Body of pancreas (tissue), 4 donors: ENCODE measurements at regions of chr2 and their contacts with region 1.

Region 1: GRCh38 chr2:187453078-187453641 is 5.1 kb upstream of the CALCRL start:
- DNase-seq: no peak
- ATAC-seq: no peak
- H3K4me3 ChIP-seq: no peak overlapping the region
- H3K27ac ChIP-seq: no peak overlapping the region
- H3K4me1 ChIP-seq: no peaks in the 10 kb centered on the region
- H3K27me3 ChIP-seq: no peaks in the 10 kb centered on the region
- CTCF ChIP-seq: peak in 6 of 7 experiments; percentile 21 to 45 (median 35)
- POLR2A ChIP-seq: no peak

Region 2: GRCh38 chr2:186862869-186863709 is 590.1 kb before region 1 on chr2:
- intact Hi-C with region 1: loop called (anchors 10 kb)
- DNase-seq: no peak
- ATAC-seq: no peak
- H3K4me3 ChIP-seq: no peak overlapping the region
- H3K27ac ChIP-seq: no peak overlapping the region
- H3K4me1 ChIP-seq: no peaks in the 10 kb centered on the region
- H3K27me3 ChIP-seq: no peaks in the 10 kb centered on the region
- CTCF ChIP-seq: peak; percentile 31 to 70 (median 65)
- POLR2A ChIP-seq: no peak

Region 3: DNA sequence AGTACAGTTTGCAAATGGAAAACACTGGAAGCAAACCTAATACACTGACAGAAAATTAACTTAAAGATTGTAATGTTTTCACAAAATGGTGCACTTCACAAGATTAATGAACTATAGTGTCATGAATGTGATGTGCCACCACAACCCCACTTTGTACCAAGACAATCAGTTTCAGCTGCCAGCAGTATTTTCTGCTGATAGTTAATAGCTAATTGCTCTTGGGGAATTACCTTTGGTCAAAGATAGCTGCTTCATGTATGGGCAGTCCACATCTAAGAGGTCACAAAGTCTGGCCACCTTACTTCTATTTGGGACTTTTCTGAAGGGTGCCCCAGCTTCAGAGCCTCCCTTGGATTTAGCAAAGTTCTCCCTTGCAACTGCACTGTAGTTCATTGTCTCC is 259.1 kb before region 1 on chr2:
- intact Hi-C with region 1: no loop called
- DNase-seq: no peak
- ATAC-seq: no peak
- H3K4me3 ChIP-seq: no peak overlapping the region
- H3K27ac ChIP-seq: no peak overlapping the region
- H3K4me1 ChIP-seq: no peaks in the 10 kb centered on the region
- H3K27me3 ChIP-seq: peaks cover 0 to 3% of the 10 kb centered on the region in 2 donors
- CTCF ChIP-seq: no peak
- POLR2A ChIP-seq: no peak

Region 4: DNA sequence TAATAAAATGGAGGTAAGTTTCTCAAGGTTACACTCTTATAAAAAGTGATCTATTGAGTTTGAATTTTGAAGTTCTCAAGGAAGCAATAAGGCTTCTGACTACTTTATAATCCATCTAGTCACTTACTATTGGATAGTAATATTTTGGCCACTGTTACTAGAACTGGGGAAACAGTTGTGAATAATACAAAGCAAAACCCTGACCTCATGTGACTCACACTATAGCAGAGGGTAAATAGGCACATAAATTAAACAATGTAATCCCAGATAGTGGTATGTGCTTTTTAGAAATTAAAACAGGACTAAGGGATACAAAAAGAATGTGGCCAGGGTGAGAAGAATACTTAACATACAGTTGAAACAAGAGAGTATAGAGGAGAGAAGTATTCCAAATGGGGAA is 83.7 kb before region 1 on chr2:
- intact Hi-C with region 1: no loop called
- DNase-seq: no peak
- ATAC-seq: no peak
- H3K4me3 ChIP-seq: no peak overlapping the region
- H3K27ac ChIP-seq: no peak overlapping the region
- H3K4me1 ChIP-seq: no peaks in the 10 kb centered on the region
- H3K27me3 ChIP-seq: no peaks in the 10 kb centered on the region
- CTCF ChIP-seq: no peak
- POLR2A ChIP-seq: no peak

Region 5: GRCh38 chr2:187529977-187530721 is 77.0 kb after region 1 on chr2:
- intact Hi-C with region 1: no loop called
- DNase-seq: no peak
- ATAC-seq: no peak
- H3K4me3 ChIP-seq: no peak overlapping the region
- H3K27ac ChIP-seq: no peak overlapping the region
- H3K4me1 ChIP-seq: no peaks in the 10 kb centered on the region
- H3K27me3 ChIP-seq: no peaks in the 10 kb centered on the region
- CTCF ChIP-seq: no peak
- POLR2A ChIP-seq: no peak